GM18951 (cell line): ENCODE measurements at regions of chr12 and their contacts with region 1.

Region 1: DNA sequence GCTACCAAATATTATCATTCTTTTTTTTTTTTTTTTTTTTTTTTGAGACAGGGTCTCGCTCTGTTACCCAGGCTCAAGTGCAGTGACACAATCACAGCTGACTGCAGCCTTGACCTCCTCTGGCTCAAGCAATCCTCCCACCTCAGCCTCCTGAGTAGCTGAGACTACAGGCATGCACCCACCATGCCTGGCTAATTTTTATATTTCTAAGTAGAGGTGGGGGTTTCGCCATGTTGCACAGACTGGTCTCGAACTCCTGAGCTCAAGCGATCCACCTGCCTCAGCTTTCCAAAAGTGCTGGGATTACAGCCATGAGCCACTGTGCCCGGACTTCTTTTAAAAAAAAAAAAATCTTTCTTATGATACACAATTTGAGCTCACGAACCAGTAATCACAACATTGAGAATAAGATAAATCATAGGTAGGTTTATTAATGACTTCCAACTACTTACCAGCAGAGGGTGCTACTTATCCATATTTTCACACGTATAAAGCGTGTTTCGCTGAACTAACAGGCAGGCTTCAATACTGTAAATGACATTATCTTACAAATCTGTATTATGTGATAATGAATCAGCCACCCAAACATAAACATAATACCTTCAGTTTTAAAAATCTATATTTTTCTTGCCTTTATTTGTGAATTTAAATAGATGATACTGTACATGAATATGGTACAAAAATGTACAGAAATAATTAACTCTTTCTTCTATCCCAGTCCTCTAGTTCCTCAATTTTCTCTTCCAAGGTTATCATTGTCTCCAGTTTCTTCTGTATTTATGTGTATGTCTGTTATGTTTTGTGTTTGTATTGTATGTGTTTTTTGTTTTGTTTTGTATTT is 42.5 kb upstream of the BCAT1 start:
- POLR2A ChIP-seq: no peak

Region 2: DNA sequence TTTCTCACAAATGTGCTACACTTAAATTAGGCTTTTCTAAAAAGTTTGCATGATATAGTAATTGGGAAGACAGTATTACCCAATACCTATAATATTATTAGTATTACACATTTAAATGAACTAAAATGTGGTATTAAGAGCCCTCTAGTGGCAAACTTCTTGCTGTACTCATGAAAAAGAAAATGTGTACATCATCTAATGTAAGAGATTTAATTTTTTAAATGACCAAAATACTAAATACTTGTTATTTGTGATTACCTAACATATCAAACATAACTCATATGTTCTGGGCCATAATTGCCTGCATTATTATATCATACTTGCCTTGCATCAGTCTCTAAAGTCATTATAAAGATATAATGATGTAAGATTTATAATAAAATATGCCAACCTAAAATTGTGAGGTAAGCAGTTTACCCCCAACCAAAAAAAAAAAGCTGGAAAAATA is 139.3 kb after region 1 on chr12:
- in situ Hi-C with region 1: loop called (anchors 5 kb)
- POLR2A ChIP-seq: no peak